ENCODE measurements at regions of chr10 and their contacts with region 1.

Region 1: DNA sequence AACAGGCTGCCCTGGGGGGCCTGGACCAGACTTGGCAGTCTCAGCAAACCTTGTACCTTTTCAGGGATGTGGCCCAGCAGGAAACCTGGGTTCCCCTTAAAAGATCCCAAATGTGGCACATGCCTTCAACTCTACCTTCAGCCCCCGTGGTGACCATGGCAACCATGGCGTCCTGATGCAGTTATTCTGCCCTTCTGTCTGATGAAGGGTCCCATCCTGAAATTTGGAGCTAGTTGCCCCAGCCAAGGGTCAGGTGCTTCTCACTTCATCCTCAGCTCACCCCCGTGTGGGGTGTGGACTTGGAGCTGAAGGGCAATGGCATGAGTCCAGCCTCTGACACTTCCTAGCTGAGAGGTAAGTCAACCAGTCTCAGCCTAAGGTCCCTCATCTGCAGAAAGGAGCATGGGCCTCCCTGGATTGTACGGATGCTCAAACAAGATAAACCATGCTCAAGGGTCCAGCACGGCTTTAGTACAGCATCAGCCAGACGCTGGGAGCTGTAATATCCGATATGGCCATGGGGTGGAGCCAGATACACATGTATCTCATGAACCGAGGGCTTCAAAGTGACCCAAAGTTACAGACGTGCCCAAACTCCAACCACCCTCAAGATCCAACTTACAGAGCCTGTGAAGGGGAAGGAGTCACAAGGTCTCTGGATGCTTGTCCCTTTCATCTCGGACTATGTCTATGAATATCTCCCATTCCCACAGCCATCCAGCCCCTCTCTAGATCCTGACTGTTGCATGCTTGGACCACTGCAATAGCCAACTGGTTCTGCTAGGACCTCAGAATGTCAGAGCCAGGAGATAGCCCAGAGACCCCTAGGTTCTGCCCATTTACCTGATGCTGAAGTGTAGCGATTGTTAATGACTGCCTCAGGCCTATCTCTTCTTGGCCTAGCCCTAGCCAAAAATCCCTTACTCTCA is 142.5 kb downstream of the SH3PXD2A start:
- DNase-seq: peak; percentile 89
- ATAC-seq: peak; percentile 93
- H3K4me3 Mint-ChIP-seq: no peak overlapping the region
- H3K27ac Mint-ChIP-seq: no peak overlapping the region
- H3K4me1 Mint-ChIP-seq: no peaks in the 10 kb centered on the region
- H3K27me3 Mint-ChIP-seq: no peaks in the 10 kb centered on the region

Region 2: DNA sequence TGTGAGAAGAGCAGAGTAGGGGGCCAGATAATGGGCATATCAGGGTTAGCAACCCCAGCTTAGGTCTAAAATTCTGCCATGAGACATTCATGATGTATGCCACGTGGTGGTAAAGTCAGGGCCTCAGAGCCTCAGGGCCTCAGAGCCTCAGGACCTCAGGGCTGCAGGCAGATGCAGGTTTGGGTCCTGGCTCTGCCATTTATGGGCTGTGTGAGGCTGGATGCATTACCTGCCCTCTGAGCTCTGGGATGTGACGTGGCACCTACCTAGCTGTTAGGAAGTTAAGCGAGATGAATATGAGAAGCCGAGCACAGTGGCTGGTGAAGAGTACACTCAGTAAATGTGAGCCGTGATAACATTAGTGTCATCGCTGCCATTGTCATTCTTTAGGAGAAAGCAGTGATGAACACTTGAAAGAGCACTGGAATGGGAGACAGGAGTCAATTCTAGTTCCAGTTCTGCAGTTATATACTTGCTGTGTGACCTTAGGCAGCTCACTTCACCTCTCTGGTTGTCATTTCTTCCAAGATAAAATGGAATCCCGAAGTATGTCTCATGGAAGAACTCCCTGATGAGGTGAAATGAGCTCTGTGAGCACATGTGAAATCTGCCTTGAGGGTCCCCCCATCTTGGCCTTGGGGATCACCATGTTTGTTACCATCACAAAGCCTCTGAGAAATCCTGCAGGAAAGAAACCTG is 15.3 kb after region 1 on chr10:
- CTCF ChIA-PET with region 1: interaction called, 11 read pairs
- POLR2A ChIA-PET with region 1: no interaction called
- intact Hi-C with region 1: no loop called
- DNase-seq: no peak
- ATAC-seq: no peak
- H3K4me3 Mint-ChIP-seq: no peak overlapping the region
- H3K27ac Mint-ChIP-seq: no peak overlapping the region
- H3K4me1 Mint-ChIP-seq: no peaks in the 10 kb centered on the region
- H3K27me3 Mint-ChIP-seq: no peaks in the 10 kb centered on the region

Region 3: GRCh38 chr10:103781329-103782061 is 68.7 kb after region 1 on chr10:
- CTCF ChIA-PET with region 1: interaction called, 6 read pairs
- POLR2A ChIA-PET with region 1: no interaction called
- intact Hi-C with region 1: loop called in 1 of 2 experiments (anchors 5 kb)
- DNase-seq: peak; percentile 33
- ATAC-seq: peak; percentile 90
- H3K4me3 Mint-ChIP-seq: no peak overlapping the region
- H3K27ac Mint-ChIP-seq: no peak overlapping the region
- H3K4me1 Mint-ChIP-seq: peaks cover 3% of the 10 kb centered on the region
- H3K27me3 Mint-ChIP-seq: peaks cover 11% of the 10 kb centered on the region

Region 4: DNA sequence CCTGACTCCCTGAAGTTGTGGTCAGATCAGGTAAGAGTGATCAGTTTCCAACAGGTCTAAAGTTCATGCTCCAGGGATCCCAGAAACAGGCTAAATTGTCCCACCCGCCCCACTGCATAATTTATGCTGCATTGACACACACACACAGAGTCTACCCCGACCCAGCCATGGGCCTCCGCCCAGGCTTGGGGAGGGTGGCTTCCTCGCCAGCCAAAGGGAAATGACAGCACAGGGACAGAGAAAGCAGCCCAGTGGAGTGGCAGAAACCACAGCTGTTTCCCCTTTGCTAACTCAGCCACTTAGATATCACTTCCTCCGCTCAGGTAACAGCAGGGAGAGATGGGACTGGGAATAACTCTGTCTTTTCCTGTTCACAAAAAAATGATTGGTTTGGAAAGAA is 133.1 kb after region 1 on chr10:
- CTCF ChIA-PET with region 1: interaction called, 28 read pairs
- POLR2A ChIA-PET with region 1: no interaction called
- intact Hi-C with region 1: no loop called
- DNase-seq: peak; percentile 51
- ATAC-seq: peak; percentile 82
- H3K4me3 Mint-ChIP-seq: no peak overlapping the region
- H3K27ac Mint-ChIP-seq: peak overlapping the region; percentile 18
- H3K4me1 Mint-ChIP-seq: peaks cover 17% of the 10 kb centered on the region
- H3K27me3 Mint-ChIP-seq: peaks cover 3% of the 10 kb centered on the region

Region 5: DNA sequence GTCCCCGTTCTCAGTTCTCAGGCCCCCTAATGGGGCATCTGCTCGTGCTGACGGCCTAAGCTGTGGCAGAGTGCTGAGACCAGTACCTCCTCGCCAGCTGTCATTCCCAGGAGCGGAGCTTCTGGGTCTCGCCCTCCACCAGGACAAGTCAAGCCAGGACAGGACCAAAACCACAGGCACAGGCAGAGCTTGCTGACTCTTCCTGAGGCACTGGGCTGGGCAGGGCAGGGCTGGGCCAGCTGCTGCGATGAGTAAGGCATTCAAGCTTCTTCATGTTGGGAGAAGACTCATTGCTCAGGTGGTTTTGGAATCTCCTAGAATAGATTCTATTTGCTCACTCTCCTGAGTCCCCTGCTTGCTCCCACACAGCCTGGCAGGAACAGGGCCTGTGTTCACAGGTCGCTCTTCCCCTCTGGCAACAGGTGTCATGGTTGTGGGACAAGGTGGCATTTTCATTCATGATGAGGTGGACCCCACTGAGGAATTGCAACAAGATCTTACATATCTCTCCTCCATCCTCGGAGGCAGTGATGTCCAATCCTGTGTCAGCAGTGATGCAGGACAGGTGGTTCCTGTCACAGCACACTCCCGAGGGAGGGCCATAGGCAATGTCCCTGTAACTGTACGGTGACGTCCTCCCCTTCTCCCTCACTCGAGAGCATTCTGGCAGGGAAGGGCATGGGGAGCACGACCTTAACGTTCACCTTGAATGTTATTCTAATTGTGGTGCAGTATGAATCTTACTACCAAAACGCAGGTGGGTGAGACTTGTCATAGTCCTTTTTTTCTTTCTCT is 159.5 kb after region 1 on chr10:
- CTCF ChIA-PET with region 1: interaction called, 13 read pairs
- POLR2A ChIA-PET with region 1: interaction called, 3 read pairs
- intact Hi-C with region 1: no loop called
- DNase-seq: no peak
- ATAC-seq: no peak
- H3K4me3 Mint-ChIP-seq: no peak overlapping the region
- H3K27ac Mint-ChIP-seq: no peak overlapping the region
- H3K4me1 Mint-ChIP-seq: no peaks in the 10 kb centered on the region
- H3K27me3 Mint-ChIP-seq: no peaks in the 10 kb centered on the region

Region 6: GRCh38 chr10:104209575-104210198 is 496.9 kb after region 1 on chr10:
- CTCF ChIA-PET with region 1: interaction called, 5 read pairs
- POLR2A ChIA-PET with region 1: no interaction called
- intact Hi-C with region 1: loop called in 1 of 2 experiments (anchors 2 kb)
- DNase-seq: peak; percentile 58
- ATAC-seq: peak; percentile 42
- H3K4me3 Mint-ChIP-seq: no peak overlapping the region
- H3K27ac Mint-ChIP-seq: no peak overlapping the region
- H3K4me1 Mint-ChIP-seq: no peaks in the 10 kb centered on the region
- H3K27me3 Mint-ChIP-seq: peaks cover 9% of the 10 kb centered on the region